BJ (cell line): ENCODE measurements at regions of chr17 and their contacts with region 1.

Region 1: DNA sequence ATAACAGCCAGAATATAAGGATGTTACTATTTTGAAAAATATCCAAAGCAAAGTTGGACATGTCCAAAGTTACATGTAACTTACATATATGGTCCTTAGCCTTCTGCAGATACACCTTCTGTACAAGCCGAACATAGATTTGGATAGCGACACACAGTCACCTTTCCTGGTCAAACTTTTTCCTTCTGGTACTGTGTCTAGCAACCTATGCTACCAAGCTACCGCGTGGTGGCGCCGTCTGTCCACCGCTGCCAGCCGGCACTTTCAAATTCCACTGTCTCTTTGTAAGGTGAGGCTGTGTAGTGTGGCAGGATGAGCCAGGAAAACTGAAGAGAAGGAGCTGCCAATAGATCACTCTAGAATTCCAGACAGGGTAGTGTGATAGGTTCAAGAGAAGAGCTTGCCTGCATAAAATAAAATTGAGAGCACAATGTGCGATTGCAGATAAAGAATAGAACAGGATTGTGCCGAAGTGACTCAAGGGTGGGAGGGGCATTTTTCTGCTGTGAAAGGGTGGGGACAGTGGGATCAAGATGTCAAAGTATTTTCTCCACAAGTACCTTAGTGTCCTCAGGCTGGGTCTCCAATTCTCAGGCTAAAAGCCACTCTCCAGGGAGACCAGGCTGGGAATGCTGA is 366.9 kb downstream of the SLC39A11 start:
- DNase-seq: no peak
- H3K4me3 ChIP-seq: no peak overlapping the region
- H3K27me3 ChIP-seq: no peaks in the 10 kb centered on the region
- CTCF ChIP-seq: peak; percentile 97

Region 2: DNA sequence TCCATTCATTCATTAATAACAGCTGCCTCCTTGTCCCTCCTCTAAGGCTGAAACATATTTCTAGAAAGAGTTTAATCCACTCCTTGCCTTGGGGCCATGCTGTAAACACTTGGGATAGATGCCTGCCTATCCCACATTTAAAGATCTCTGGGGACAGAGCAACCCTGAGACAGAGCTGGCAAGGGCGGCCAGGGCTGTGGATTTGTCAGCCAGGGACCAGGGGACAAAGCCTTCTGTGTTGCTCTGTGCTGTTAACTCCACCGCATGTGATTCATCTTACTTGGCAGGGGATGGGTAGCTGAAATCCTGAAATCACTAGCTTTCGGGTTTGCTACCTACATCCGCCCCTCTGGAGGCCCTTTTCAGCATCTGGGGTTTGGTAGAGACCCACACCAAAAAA is 26.0 kb before region 1 on chr17:
- CTCF ChIA-PET with region 1: interaction called, 11 read pairs
- POLR2A ChIA-PET with region 1: no interaction called
- DNase-seq: no peak
- H3K4me3 ChIP-seq: no peak overlapping the region
- H3K27me3 ChIP-seq: no peaks in the 10 kb centered on the region
- CTCF ChIP-seq: no peak

Region 3: DNA sequence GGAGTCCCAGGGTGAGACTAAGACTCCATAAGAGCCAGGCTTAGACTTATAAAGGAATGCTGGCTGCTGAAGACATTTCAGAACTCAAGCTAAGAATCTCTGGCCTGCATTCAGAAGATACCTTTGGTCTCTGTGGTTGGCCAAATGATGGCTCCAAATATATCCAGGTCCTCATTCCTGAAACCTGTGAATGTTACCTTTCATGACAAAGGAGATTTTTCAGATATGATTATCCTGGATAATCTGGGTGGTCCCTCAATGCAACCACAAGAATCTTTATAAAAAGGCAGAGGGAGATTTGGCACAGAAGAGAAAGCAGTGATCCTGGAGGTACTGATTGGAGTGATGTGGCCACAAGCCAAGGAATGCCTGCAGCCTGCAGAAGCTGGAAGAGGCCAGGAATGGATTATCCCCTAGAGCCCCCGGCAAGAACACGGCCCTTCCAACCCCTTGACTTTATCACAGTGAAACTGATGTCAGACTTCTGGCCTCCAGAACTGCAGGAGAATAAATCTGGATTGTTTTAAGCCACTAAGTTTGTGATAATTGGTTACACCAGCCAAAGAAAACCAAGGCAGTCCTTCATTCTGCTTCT is 113.7 kb after region 1 on chr17:
- CTCF ChIA-PET with region 1: no interaction called
- POLR2A ChIA-PET with region 1: no interaction called
- DNase-seq: no peak
- H3K4me3 ChIP-seq: no peak overlapping the region
- H3K27me3 ChIP-seq: no peaks in the 10 kb centered on the region
- CTCF ChIP-seq: no peak

Region 4: DNA sequence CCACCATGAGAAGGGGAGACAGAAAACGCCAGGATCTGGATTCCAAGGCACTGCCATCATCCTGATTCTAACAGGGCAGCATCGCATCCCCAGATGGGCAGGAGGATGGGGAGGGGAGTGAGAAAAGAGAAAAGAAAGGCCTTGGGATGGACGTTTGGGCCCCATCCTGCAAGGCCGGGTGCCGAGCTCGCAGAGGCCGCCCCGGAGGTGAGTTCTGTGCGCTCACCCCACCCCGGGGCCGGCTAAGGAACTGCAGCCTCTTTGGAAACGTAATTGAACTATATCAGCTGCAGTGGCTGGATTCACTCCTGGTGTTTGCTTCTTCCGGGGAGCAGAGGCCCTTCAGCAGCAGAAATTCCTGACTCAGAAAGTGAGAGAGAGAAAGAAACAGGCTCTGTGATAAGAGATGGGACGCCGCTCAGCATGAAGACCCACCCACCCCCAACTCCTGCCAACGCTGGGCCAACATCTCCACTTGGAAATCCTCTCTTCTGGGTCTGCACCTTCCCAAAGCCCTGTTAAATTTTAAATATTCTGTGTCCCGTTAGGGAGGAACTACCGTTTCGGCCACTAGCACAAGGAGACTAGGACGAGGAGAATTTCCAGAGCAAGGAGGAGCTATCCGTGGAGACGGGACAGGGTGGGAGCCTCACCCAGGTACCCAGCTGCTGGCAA is 430.8 kb after region 1 on chr17:
- CTCF ChIA-PET with region 1: interaction called, 82 read pairs
- POLR2A ChIA-PET with region 1: no interaction called
- DNase-seq: no peak
- H3K4me3 ChIP-seq: no peak overlapping the region
- H3K27me3 ChIP-seq: peaks cover 2% of the 10 kb centered on the region
- CTCF ChIP-seq: peak; percentile 93

Region 5: GRCh38 chr17:73192894-73193701 is 467.5 kb after region 1 on chr17 and contains the start of gene COG1:
- CTCF ChIA-PET with region 1: interaction called, 120 read pairs
- POLR2A ChIA-PET with region 1: no interaction called
- DNase-seq: no peak
- H3K4me3 ChIP-seq: peak within 1 kb of the TSS; percentile 95
- H3K27me3 ChIP-seq: no peaks in the 10 kb centered on the region
- CTCF ChIP-seq: no peak
- polyA plus RNA-seq, gene COG1: 39.4 and 54.9 TPM in 2 replicates

Region 6: GRCh38 chr17:73255671-73256181 is 530.2 kb after region 1 on chr17:
- CTCF ChIA-PET with region 1: interaction called, 23 read pairs
- POLR2A ChIA-PET with region 1: no interaction called
- DNase-seq: no peak
- H3K4me3 ChIP-seq: no peak overlapping the region
- H3K27me3 ChIP-seq: no peaks in the 10 kb centered on the region; the same call in 1 of the 2 replicates
- CTCF ChIP-seq: peak; percentile 98